HCT116 (cell line): ENCODE measurements at regions of chr4 and their contacts with region 1.

Region 1: GRCh38 chr4:86921608-86922252 is 13.1 kb upstream of the AFF1 start:
- DNase-seq: no peak
- ATAC-seq: no peak
- H3K4me3 ChIP-seq: no peak overlapping the region
- H3K27ac ChIP-seq: no peak overlapping the region
- H3K4me1 ChIP-seq: peaks cover 7 to 25% of the 10 kb centered on the region in 2 experiments
- H3K27me3 ChIP-seq: no peaks in the 10 kb centered on the region
- CTCF ChIP-seq: no peak
- POLR2A ChIP-seq: no peak
- RAD21 ChIP-seq: no peak

Region 2: GRCh38 chr4:86497980-86498862 is 423.5 kb before region 1 on chr4:
- CTCF ChIA-PET with region 1: interaction called, 16 read pairs
- POLR2A ChIA-PET with region 1: no interaction called
- RAD21 ChIA-PET with region 1: interaction called, 3 read pairs
- intact Hi-C with region 1: no loop called
- DNase-seq: peak; percentile 47
- ATAC-seq: peak; percentile 97
- H3K4me3 ChIP-seq: no peak overlapping the region
- H3K27ac ChIP-seq: no peak overlapping the region
- H3K4me1 ChIP-seq: peaks cover 8% of the 10 kb centered on the region in 2 experiments; a peak in 3 of 4 replicates
- H3K27me3 ChIP-seq: no peaks in the 10 kb centered on the region
- CTCF ChIP-seq: peak; percentile 61 to 84 (median 80); a peak in 5 of 6 replicates
- POLR2A ChIP-seq: no peak
- RAD21 ChIP-seq: peak; percentile 72

Region 3: GRCh38 chr4:86934771-86935565 is 13.2 kb after region 1 on chr4 and contains the start of gene AFF1:
- CTCF ChIA-PET with region 1: interaction called, 28 read pairs
- POLR2A ChIA-PET with region 1: interaction called, 11 read pairs
- RAD21 ChIA-PET with region 1: interaction called in 1 of 2 experiments, 5 read pairs
- intact Hi-C with region 1: no loop called
- DNase-seq: peak; percentile 82
- ATAC-seq: peak; percentile 85
- H3K4me3 ChIP-seq: peak within 1 kb of the TSS; percentile 59 to 84
- H3K27ac ChIP-seq: peak within 1 kb of the TSS; percentile 91
- H3K4me1 ChIP-seq: peaks cover 16 to 35% of the 10 kb centered on the region in 2 experiments
- H3K27me3 ChIP-seq: no peaks in the 10 kb centered on the region
- CTCF ChIP-seq: peak in 2 of 3 experiments; percentile 13 to 38; a peak in 2 of 6 replicates
- POLR2A ChIP-seq: peak; percentile 49
- RAD21 ChIP-seq: no peak
- total RNA-seq, gene AFF1: 43.1 TPM

Region 4: DNA sequence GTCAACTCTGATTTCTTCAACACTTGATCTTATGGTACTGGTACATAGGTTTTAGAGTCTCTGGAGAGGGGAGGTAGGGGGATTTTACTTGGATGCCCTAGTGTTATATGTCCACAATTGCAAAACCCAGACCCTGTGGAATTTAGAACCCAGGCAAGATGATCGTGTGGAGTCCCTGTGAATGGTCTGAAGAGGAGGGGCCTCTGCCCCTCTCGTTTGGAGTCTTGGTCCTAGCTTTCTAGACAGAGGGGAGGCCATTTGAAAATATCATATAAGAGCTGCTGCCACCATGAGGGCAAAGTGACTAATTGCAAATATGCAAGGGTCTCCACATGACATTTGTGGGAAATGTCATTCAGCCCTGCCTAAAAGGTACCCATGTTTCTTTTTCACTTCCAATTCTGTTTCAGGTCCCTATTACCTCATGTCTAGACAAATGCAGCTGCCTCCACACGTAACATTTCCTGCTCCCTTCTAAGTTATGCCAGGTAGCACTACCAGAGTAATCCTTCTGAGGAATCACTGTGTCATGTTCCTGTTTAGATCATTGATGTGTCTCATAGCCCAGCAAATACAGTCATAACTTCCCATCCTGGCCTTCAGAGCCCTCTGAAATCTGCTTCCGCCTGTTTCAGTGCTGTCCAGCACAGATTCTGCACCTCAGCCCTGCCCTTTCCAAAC is 171.9 kb after region 1 on chr4:
- CTCF ChIA-PET with region 1: interaction called, 49 read pairs
- POLR2A ChIA-PET with region 1: no interaction called
- RAD21 ChIA-PET with region 1: interaction called, 9 to 15 read pairs
- intact Hi-C with region 1: loop called (anchors 1 kb)
- DNase-seq: peak; percentile 23
- ATAC-seq: peak; percentile 83
- H3K4me3 ChIP-seq: no peak overlapping the region
- H3K27ac ChIP-seq: peak overlapping the region; percentile 23; the same call in 1 of the 2 replicates
- H3K4me1 ChIP-seq: peaks cover 18 to 20% of the 10 kb centered on the region in 2 experiments
- H3K27me3 ChIP-seq: no peaks in the 10 kb centered on the region
- CTCF ChIP-seq: peak; percentile 43 to 66 (median 63); a peak in 4 of 6 replicates
- POLR2A ChIP-seq: no peak
- RAD21 ChIP-seq: peak; percentile 74

Region 5: DNA sequence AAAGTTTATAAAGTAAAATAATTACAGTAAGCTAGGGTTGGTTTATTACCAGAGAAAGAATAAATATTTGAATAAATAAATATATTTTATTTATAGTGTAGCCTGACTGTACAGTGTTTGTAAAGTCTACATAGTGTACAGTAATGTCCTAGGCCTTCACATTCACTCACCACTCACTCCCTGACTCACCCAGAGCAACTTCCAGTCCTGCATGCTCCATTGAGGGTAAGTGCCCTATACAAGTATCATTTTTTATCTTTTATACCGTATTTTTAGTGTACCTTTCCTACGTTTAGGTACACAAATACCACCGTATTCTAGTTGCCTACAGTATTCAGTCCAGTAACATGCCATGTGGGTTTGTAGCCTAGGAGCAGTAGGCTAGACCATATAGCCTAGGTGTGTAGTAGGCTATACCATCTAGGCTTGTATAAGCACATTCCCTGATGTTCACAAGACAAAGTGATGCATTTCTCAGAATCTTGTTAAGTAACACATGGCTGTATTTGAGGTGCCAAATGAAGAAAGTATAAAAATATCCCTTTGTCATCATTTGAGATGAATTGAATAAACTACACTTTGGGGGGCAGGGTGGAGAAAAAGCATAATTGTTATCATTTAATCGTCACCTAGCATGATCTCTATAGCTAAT is 313.4 kb after region 1 on chr4:
- CTCF ChIA-PET with region 1: interaction called, 13 read pairs
- POLR2A ChIA-PET with region 1: no interaction called
- RAD21 ChIA-PET with region 1: no interaction called
- intact Hi-C with region 1: loop called (anchors 1 kb)
- DNase-seq: no peak
- ATAC-seq: peak; percentile 21; the same call in 1 of the 2 replicates
- H3K4me3 ChIP-seq: peak overlapping the region in 1 of 2 experiments; percentile 55; a peak in 1 of 4 replicates
- H3K27ac ChIP-seq: no peak overlapping the region
- H3K4me1 ChIP-seq: peaks cover 0 to 10% of the 10 kb centered on the region in 2 experiments; a peak in 2 of 4 replicates
- H3K27me3 ChIP-seq: no peaks in the 10 kb centered on the region
- CTCF ChIP-seq: no peak
- POLR2A ChIP-seq: no peak
- RAD21 ChIP-seq: no peak

Region 6: GRCh38 chr4:88107406-88108107 is 1185.8 kb after region 1 on chr4:
- CTCF ChIA-PET with region 1: no interaction called
- POLR2A ChIA-PET with region 1: no interaction called
- RAD21 ChIA-PET with region 1: no interaction called
- intact Hi-C with region 1: no loop called
- DNase-seq: no peak
- ATAC-seq: no peak
- H3K4me3 ChIP-seq: no peak overlapping the region
- H3K27ac ChIP-seq: no peak overlapping the region
- H3K4me1 ChIP-seq: peaks cover 0 to 23% of the 10 kb centered on the region in 2 experiments; a peak in 3 of 4 replicates
- H3K27me3 ChIP-seq: no peaks in the 10 kb centered on the region
- CTCF ChIP-seq: no peak
- POLR2A ChIP-seq: no peak
- RAD21 ChIP-seq: no peak